ENCODE measurements at regions of chrX and their contacts with region 1.

Region 1: DNA sequence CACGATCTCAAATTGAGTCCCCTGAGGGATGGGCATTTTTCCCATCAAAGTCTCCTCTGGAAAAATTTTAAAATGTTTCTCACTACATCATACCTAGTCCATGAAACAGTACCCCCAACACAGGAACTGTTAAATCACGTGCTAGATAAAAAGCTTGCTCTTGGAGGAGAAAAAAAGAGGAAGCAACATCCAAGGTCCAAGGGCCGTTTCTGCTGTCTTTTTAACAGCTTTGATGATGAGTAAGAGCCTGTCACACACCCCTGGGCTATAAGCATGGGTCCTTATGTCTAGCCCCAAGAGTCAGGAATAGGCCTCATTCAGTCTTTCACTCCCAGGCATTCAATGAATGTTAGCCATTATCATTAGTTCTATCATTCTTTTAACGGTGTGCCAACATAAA is 128.9 kb downstream of the SH3KBP1 start:
- DNase-seq: no peak
- H3K4me3 Mint-ChIP-seq: peak overlapping the region; percentile 9
- H3K27ac Mint-ChIP-seq: peak overlapping the region; percentile 71
- H3K4me1 Mint-ChIP-seq: peaks cover 56% of the 10 kb centered on the region
- H3K27me3 Mint-ChIP-seq: no peaks in the 10 kb centered on the region
- CTCF ChIP-seq: no peak

Region 2: GRCh38 chrX:19544693-19545305 is 213.7 kb before region 1 on chrX:
- CTCF ChIA-PET with region 1: no interaction called
- intact Hi-C with region 1: no loop called
- DNase-seq: peak; percentile 46
- H3K4me3 Mint-ChIP-seq: no peak overlapping the region
- H3K27ac Mint-ChIP-seq: peak overlapping the region; percentile 32
- H3K4me1 Mint-ChIP-seq: no peaks in the 10 kb centered on the region
- H3K27me3 Mint-ChIP-seq: no peaks in the 10 kb centered on the region
- CTCF ChIP-seq: peak; percentile 58

Region 3: DNA sequence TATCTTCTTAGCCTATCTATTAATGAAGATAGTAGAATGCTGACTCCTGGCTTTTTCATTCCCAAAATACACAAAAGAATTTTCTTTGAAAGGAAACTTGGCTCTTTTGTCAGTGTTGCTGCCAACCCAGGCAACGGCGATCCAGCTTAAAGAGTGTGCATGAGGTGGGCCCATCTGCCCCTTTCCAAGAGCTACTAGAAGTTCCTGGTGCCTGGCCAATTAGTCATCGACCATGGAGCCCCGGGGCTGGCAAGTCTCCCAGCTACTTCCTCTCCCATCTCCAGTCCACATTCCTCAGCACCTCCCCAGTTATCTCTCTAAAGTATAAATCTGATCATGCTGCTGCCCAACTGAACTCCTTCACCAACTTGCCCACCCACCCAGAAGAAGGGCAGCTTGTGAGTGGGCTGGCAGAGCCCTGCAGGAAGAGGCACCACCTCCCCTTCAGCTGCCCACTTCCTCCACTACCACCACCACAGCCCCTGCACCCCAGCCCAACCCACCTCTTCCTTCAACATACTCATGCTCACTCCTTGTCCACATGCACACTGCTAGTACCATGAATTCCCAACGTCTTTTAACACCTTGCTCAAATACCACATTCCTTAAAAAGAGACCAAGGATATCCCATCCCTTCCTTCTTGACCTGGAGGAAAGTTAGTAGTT is 85.0 kb before region 1 on chrX:
- CTCF ChIA-PET with region 1: no interaction called
- intact Hi-C with region 1: loop called (anchors 5 kb)
- DNase-seq: peak; percentile 85
- H3K4me3 Mint-ChIP-seq: peak overlapping the region; percentile 32
- H3K27ac Mint-ChIP-seq: peak overlapping the region; percentile 85
- H3K4me1 Mint-ChIP-seq: peaks cover 49% of the 10 kb centered on the region
- H3K27me3 Mint-ChIP-seq: no peaks in the 10 kb centered on the region
- CTCF ChIP-seq: no peak

Region 4: GRCh38 chrX:19709812-19710518 is 48.6 kb before region 1 on chrX:
- CTCF ChIA-PET with region 1: no interaction called
- intact Hi-C with region 1: no loop called
- DNase-seq: no peak
- H3K4me3 Mint-ChIP-seq: no peak overlapping the region
- H3K27ac Mint-ChIP-seq: no peak overlapping the region
- H3K4me1 Mint-ChIP-seq: no peaks in the 10 kb centered on the region
- H3K27me3 Mint-ChIP-seq: no peaks in the 10 kb centered on the region
- CTCF ChIP-seq: no peak

Region 5: DNA sequence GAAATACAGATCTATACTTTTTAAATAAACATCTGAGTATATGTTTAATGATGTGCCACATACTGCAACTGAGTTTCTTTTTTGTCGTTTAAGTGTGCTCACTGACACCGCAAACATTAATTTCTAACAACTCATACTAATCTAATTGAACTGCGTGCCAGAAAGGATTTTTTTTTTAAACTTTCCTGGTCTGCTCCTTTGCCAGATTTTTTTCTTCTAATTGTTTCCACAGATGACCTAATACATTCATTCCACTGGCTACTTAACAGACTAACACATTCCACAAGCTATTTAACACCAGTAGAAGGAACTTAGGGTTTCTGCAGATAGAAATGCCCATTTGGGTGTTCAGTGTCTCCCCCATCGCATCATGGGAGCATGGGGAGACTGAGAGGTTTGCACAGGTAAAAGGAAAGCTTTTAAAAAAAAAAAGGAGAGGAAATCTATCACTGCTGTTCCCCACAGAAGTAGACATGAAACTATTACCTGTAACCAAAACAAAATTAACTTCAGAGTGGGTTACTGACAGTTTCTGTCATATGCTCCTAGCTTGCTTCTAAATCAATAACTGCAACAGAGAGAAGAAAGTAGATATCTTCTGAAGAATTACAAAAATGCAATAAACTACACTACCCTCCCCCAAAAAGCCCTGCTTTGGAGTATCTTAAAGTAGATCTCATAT is 97.3 kb after region 1 on chrX:
- CTCF ChIA-PET with region 1: no interaction called
- intact Hi-C with region 1: loop called (anchors 5 kb)
- DNase-seq: no peak
- H3K4me3 Mint-ChIP-seq: no peak overlapping the region
- H3K27ac Mint-ChIP-seq: no peak overlapping the region
- H3K4me1 Mint-ChIP-seq: peaks cover 38% of the 10 kb centered on the region
- H3K27me3 Mint-ChIP-seq: no peaks in the 10 kb centered on the region
- CTCF ChIP-seq: no peak